Activated CD8-positive, alpha-beta T cell treated with anti-CD3 and anti-CD28 coated beads for 36 hours (primary cell): ENCODE measurements at regions of chr7 and their contacts with region 1.

Region 1: GRCh38 chr7:137898839-137899721 is 52.3 kb upstream of the DGKI start:
- DNase-seq: peak; percentile 86
- ATAC-seq: peak; percentile 84
- H3K4me3 Mint-ChIP-seq: no peak overlapping the region
- H3K27ac Mint-ChIP-seq: peak overlapping the region; percentile 74
- H3K4me1 Mint-ChIP-seq: peaks cover 35% of the 10 kb centered on the region
- H3K27me3 Mint-ChIP-seq: no peaks in the 10 kb centered on the region
- CTCF ChIP-seq: peak; percentile 75

Region 2: GRCh38 chr7:137606061-137606674 is 292.9 kb before region 1 on chr7:
- CTCF ChIA-PET with region 1: interaction called, 3 read pairs
- POLR2A ChIA-PET with region 1: no interaction called
- intact Hi-C with region 1: loop called (anchors 5 kb)
- DNase-seq: no peak
- ATAC-seq: no peak
- H3K4me3 Mint-ChIP-seq: no peak overlapping the region
- H3K27ac Mint-ChIP-seq: no peak overlapping the region
- H3K4me1 Mint-ChIP-seq: no peaks in the 10 kb centered on the region
- H3K27me3 Mint-ChIP-seq: peaks cover 7% of the 10 kb centered on the region
- CTCF ChIP-seq: peak; percentile 46

Region 3: GRCh38 chr7:137846827-137847567 is 52.1 kb before region 1 on chr7 and contains the start of gene DGKI:
- CTCF ChIA-PET with region 1: no interaction called
- POLR2A ChIA-PET with region 1: no interaction called
- intact Hi-C with region 1: loop called (anchors 5 kb)
- DNase-seq: peak; percentile 5
- ATAC-seq: peak; percentile 37
- H3K4me3 Mint-ChIP-seq: peak within 1 kb of the TSS; percentile 53
- H3K27ac Mint-ChIP-seq: no peak within 1 kb of the TSS
- H3K4me1 Mint-ChIP-seq: peaks cover 10% of the 10 kb centered on the region
- H3K27me3 Mint-ChIP-seq: peaks cover 50% of the 10 kb centered on the region
- CTCF ChIP-seq: no peak
- total RNA-seq, gene DGKI: 0.38 to 0.65 TPM

Region 4: DNA sequence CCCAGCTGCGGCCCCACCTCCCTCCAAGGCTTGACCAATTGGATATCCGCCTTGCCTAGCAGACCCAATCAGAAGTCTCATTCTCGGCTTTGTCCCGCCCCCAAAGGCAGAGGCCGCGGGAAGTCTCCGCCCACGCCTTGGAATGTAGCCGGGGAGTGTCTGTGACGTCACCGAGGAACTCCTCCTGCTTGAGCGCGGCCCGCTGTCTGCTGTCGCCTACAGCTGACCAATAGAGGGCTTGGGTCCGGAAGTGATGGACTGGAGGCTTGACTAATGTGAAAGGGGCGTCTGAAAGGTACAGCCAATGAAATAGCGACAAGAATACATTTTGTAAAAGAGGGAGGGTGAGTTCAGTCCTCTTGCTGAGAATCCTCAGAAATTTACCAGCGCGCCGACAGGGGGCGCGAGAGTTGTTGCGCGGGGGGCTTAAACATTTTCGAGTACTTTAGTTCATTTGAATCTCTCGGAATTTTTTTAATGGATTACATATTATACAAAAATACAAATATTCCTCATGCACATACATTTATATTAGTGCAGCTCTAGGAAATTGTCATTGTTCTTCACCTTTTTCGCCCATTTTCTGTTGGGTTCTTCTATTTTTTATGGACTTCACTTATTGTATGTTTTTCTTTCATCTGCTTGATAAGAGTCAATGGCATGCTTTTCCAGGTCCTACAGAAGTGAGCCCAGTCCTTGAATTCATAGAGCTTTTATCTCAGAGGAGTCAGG is 103.2 kb after region 1 on chr7:
- CTCF ChIA-PET with region 1: interaction called, 334 read pairs
- POLR2A ChIA-PET with region 1: interaction called, 3 read pairs
- intact Hi-C with region 1: no loop called
- DNase-seq: peak; percentile 98
- ATAC-seq: peak; percentile 96
- H3K4me3 Mint-ChIP-seq: peak overlapping the region; percentile 94
- H3K27ac Mint-ChIP-seq: peak overlapping the region; percentile 93
- H3K4me1 Mint-ChIP-seq: peaks cover 25% of the 10 kb centered on the region
- H3K27me3 Mint-ChIP-seq: no peaks in the 10 kb centered on the region
- CTCF ChIP-seq: peak; percentile 89

Region 5: DNA sequence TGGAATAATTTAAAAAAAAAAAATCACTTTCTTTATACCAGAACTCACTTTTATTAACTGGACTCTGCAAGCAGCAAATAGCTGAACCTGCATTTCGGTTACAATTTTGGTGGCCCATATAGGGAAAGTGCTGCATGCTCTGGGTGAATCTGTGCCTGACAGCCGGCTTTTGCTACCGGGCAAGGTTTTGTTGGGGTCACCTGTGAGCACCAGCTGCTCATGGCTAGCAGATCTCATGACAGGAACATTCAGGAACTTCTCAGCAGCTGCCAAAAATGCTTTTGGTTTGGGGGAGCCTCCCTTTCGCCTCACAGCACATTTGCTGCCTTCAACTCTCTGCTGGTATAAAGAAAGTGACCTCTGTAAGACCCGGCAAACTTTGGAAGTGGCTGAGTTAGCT is 116.0 kb after region 1 on chr7:
- CTCF ChIA-PET with region 1: interaction called, 334 read pairs
- POLR2A ChIA-PET with region 1: no interaction called
- intact Hi-C with region 1: no loop called
- DNase-seq: no peak
- ATAC-seq: no peak
- H3K4me3 Mint-ChIP-seq: no peak overlapping the region
- H3K27ac Mint-ChIP-seq: no peak overlapping the region
- H3K4me1 Mint-ChIP-seq: no peaks in the 10 kb centered on the region
- H3K27me3 Mint-ChIP-seq: no peaks in the 10 kb centered on the region
- CTCF ChIP-seq: no peak